Activated CD4-positive, alpha-beta T cell treated with anti-CD3 and anti-CD28 coated beads for 36 hours (primary cell): ENCODE measurements at regions of chr16 and their contacts with region 1.

Region 1: GRCh38 chr16:69132424-69133252 is at the starts of genes CHTF8 and UTP4:
- DNase-seq: peak; percentile 94
- ATAC-seq: peak; percentile 95
- H3K4me3 Mint-ChIP-seq: peak within 1 kb of the TSS; percentile 93
- H3K27ac Mint-ChIP-seq: peak within 1 kb of the TSS; percentile 93
- H3K4me1 Mint-ChIP-seq: peaks cover 59% of the 10 kb centered on the region
- H3K27me3 Mint-ChIP-seq: no peaks in the 10 kb centered on the region
- total RNA-seq, gene CHTF8: 153 to 194 TPM
- total RNA-seq, gene UTP4: 102 to 119 TPM

Region 2: GRCh38 chr16:68448360-68448970 is 684.2 kb before region 1 on chr16 and contains the start of gene SMPD3:
- CTCF ChIA-PET with region 1: no interaction called
- POLR2A ChIA-PET with region 1: no interaction called
- intact Hi-C with region 1: loop called in 1 of 2 experiments (anchors 1 kb)
- DNase-seq: peak; percentile 99
- ATAC-seq: peak; percentile 98
- H3K4me3 Mint-ChIP-seq: peak within 1 kb of the TSS; percentile 71
- H3K27ac Mint-ChIP-seq: no peak within 1 kb of the TSS
- H3K4me1 Mint-ChIP-seq: peaks cover 14% of the 10 kb centered on the region
- H3K27me3 Mint-ChIP-seq: peaks cover 19% of the 10 kb centered on the region
- total RNA-seq, gene SMPD3: 0.07 to 0.37 TPM

Region 3: DNA sequence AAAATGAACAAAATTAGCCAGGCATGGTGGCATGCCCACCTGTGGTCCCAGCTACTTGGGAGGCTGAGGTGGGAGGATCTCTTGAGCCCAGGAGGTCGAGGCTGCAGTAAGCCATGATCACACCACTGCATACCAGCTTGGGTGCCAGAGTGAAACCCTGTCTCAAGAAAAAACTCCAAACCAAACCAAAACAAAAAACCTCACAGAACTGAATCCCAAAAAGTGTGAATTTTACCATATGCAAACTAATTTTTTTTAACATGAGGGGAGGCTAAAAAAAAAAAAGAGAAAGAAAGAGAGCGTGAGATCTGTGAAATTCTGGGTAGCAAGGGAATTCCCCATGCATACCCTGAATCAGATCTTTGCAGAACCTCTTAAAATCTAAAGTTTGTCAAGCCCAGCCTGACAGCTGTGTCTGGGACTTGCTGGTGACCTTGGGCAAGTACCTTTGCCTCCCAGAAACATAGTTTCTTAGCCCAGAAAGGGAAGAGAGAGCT is 412.6 kb before region 1 on chr16:
- CTCF ChIA-PET with region 1: no interaction called
- POLR2A ChIA-PET with region 1: no interaction called
- intact Hi-C with region 1: no loop called
- DNase-seq: peak; percentile 64
- ATAC-seq: peak; percentile 96
- H3K4me3 Mint-ChIP-seq: no peak overlapping the region
- H3K27ac Mint-ChIP-seq: peak overlapping the region; percentile 82
- H3K4me1 Mint-ChIP-seq: peaks cover 19% of the 10 kb centered on the region
- H3K27me3 Mint-ChIP-seq: no peaks in the 10 kb centered on the region

Region 4: DNA sequence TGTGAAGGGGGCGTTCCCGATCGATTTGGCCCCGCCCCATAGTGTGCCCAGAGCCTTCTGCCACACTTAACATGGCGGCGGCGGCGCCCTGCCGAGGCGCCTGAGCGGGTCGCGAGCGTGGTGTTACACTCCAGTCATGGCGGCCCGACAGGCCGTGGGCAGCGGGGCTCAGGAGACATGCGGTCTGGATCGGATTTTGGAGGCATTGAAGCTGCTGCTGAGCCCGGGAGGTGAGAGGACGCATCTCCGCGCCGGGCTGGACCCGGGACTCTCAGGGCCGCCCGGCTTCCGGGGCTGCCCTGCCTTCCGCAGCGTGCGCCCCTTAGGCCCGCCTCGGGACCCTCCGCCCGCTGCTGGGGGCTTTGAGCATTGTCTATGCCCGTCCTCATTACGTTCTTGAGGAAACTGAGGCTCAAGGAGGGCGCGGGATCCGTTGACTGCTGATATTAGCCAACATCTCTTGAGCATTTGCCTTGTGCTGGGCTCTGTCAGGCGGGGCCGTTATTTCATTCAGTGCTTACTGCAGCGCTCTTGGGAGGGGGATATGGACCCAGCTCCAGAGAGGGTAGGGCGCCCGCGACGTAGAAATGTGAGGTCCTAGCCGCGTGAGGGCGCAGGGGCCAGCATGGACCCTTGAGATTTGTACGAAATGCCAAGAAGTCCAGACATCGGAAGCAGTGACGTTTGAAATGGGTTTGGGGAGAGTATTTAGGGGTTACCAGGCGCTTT is 289.0 kb before region 1 on chr16 and contains the start of gene TANGO6:
- CTCF ChIA-PET with region 1: interaction called, 4 read pairs
- POLR2A ChIA-PET with region 1: no interaction called
- intact Hi-C with region 1: loop called (anchors 1 to 5 kb)
- DNase-seq: peak; percentile 95
- ATAC-seq: peak; percentile 93
- H3K4me3 Mint-ChIP-seq: peak within 1 kb of the TSS; percentile 84
- H3K27ac Mint-ChIP-seq: peak within 1 kb of the TSS; percentile 91
- H3K4me1 Mint-ChIP-seq: peaks cover 27% of the 10 kb centered on the region
- H3K27me3 Mint-ChIP-seq: no peaks in the 10 kb centered on the region
- total RNA-seq, gene TANGO6: 29.7 to 31.2 TPM

Region 5: GRCh38 chr16:69186642-69187445 is 54.2 kb after region 1 on chr16 and contains the start of gene SNTB2:
- CTCF ChIA-PET with region 1: no interaction called
- POLR2A ChIA-PET with region 1: interaction called, 3 read pairs
- intact Hi-C with region 1: loop called (anchors 1 to 2 kb)
- DNase-seq: peak; percentile 91
- ATAC-seq: peak; percentile 83
- H3K4me3 Mint-ChIP-seq: peak within 1 kb of the TSS; percentile 83
- H3K27ac Mint-ChIP-seq: peak within 1 kb of the TSS; percentile 96
- H3K4me1 Mint-ChIP-seq: peaks cover 50% of the 10 kb centered on the region
- H3K27me3 Mint-ChIP-seq: no peaks in the 10 kb centered on the region
- total RNA-seq, gene SNTB2: 15.7 to 17.2 TPM

Region 6: DNA sequence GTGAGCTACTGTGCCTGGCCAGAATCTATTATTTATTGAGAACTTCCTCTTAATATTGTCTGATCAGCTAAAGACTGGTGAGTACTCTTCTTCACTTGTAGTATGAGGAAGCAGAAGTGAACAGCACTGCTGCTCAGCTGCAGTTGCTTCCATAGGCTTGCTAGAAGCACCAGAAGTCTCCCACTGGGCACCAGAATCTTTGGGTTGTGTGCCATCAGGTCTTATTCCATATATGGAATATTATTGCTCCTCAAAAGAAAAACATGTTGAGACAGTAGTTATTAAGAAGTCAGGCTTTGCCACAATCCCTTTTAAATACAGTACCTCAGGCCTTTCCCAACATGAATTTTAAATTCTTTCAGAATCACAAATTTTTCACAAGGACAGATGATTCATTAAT is 71.5 kb after region 1 on chr16:
- CTCF ChIA-PET with region 1: no interaction called
- POLR2A ChIA-PET with region 1: no interaction called
- intact Hi-C with region 1: no loop called
- DNase-seq: no peak
- ATAC-seq: peak; percentile 11
- H3K4me3 Mint-ChIP-seq: no peak overlapping the region
- H3K27ac Mint-ChIP-seq: peak overlapping the region; percentile 55
- H3K4me1 Mint-ChIP-seq: peaks cover 26% of the 10 kb centered on the region
- H3K27me3 Mint-ChIP-seq: no peaks in the 10 kb centered on the region

Region 7: DNA sequence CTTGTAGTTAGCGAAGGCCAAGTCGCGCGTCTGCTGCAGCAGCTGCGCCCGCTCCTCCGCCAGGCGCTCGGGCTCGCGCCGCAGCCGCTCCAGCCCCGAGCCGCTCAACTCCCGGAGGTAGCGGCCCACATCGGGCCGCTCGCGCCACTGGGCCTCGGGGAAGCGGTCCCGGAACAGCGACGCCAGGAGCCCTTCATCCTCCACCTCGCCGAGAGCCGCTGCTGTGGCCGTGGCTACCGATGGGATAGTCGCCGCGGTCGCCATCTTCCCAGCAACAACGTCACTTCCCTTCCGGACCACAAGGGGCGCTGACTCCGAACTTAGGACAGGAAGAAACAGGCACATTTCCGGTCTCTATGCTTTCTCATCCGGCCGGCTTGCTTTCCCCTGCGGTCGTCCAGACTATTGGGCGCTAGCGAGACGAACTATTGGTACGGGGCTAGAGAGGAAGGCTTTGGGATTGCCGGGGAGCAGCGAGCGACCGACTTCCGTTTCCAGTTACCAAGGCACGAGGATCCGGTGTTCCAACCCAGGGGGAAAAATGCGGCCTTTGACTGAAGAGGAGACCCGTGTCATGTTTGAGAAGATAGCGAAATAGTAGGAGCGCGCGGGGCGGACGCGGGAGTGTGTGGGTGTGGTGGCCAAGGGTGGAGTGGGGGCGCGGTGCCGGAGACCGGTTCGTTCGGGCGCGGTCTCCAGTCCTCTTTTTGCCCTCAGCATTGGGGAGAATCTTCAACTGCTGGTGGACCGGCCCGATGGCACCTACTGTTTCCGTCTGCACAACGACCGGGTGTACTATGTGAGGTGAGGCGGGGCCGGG is 206.9 kb after region 1 on chr16 and contains the starts of genes COG8 and NIP7:
- CTCF ChIA-PET with region 1: interaction called, 3 read pairs
- POLR2A ChIA-PET with region 1: no interaction called
- intact Hi-C with region 1: loop called in 1 of 2 experiments (anchors 1 kb)
- DNase-seq: peak; percentile 95
- ATAC-seq: peak; percentile 89
- H3K4me3 Mint-ChIP-seq: peak within 1 kb of the TSS; percentile 96
- H3K27ac Mint-ChIP-seq: peak within 1 kb of the TSS; percentile 98
- H3K4me1 Mint-ChIP-seq: peaks cover 37% of the 10 kb centered on the region
- H3K27me3 Mint-ChIP-seq: no peaks in the 10 kb centered on the region
- total RNA-seq, gene COG8: 30.0 to 30.3 TPM
- total RNA-seq, gene NIP7: 39.1 to 41.3 TPM

Region 8: DNA sequence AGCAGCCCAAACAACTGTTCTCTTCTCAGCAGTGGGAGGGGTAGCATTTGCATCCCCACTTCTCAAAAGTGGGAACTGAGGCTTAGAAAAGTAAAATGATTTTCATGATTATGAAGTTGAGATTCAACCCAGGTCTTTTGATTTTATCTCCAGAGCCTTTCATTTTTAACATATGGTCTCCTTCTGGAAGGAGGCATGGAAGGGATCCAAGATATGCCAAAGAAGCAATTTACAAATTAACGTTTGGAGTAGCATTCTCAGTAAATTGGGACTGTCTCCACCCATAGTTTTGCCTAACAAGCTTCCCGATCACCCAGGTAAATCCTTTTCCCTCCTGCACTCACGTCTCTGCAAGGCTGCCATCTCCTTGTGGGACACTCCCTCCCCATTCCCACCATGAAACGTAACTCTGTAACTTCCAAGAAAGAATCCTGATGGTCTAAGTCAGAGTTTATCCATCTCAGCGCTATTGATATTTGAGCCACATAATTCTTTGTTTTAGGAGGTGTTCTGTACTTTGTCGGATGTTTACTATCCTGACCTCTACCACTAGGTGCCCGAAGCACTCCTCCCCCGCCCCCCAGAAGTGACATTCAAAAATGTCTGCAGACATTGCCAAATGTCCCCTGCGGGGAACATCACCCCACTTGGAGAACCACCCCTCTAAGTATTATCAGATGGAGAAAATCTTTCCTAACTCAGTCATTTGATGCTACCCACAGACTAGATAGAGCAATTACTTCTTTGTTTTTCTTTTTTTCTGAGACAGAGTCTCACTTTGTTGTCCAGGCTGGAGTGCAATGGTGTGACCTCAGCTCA is 400.2 kb after region 1 on chr16:
- CTCF ChIA-PET with region 1: no interaction called
- POLR2A ChIA-PET with region 1: no interaction called
- intact Hi-C with region 1: no loop called
- DNase-seq: no peak
- ATAC-seq: no peak
- H3K4me3 Mint-ChIP-seq: no peak overlapping the region
- H3K27ac Mint-ChIP-seq: no peak overlapping the region
- H3K4me1 Mint-ChIP-seq: peaks cover 33% of the 10 kb centered on the region
- H3K27me3 Mint-ChIP-seq: peaks cover 1% of the 10 kb centered on the region

Region 9: DNA sequence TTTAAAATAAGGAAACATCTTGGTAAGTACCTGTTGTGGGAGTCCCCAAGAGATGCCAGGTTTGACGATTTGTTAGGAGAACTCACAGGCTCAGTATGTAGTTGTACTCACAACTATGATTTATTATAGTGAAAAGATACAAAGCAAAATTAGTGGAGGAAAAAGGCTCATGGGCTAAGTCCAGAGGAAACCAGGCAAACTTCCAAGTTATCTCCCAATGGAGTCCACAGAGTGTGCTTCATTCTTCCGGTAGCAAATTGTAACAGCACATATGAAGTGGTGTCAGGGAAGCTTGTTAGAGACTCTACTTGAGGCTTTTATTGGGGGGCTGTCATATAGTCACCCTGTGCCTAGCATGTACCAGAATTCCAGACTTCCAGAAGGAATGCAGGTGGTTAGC is 1216.4 kb after region 1 on chr16:
- CTCF ChIA-PET with region 1: no interaction called
- POLR2A ChIA-PET with region 1: no interaction called
- intact Hi-C with region 1: loop called in 1 of 2 experiments (anchors 5 kb)
- DNase-seq: no peak
- ATAC-seq: no peak
- H3K4me3 Mint-ChIP-seq: no peak overlapping the region
- H3K27ac Mint-ChIP-seq: no peak overlapping the region
- H3K4me1 Mint-ChIP-seq: peaks cover 36% of the 10 kb centered on the region
- H3K27me3 Mint-ChIP-seq: no peaks in the 10 kb centered on the region

Region 10: GRCh38 chr16:70508752-70509151 is 1376.1 kb after region 1 on chr16:
- CTCF ChIA-PET with region 1: no interaction called
- POLR2A ChIA-PET with region 1: no interaction called
- intact Hi-C with region 1: no loop called
- DNase-seq: no peak
- ATAC-seq: no peak
- H3K4me3 Mint-ChIP-seq: no peak overlapping the region
- H3K27ac Mint-ChIP-seq: peak overlapping the region; percentile 20
- H3K4me1 Mint-ChIP-seq: peaks cover 8% of the 10 kb centered on the region
- H3K27me3 Mint-ChIP-seq: no peaks in the 10 kb centered on the region